Aorta (tissue), 5 donors: ENCODE measurements at regions of chr1 and their contacts with region 1.

Region 1: GRCh38 chr1:244835276-244836134 is at the start of gene COX20:
- DNase-seq: peak; percentile 94 to 96
- ATAC-seq: peak; percentile 95
- H3K4me3 ChIP-seq: peak within 1 kb of the TSS; percentile 92 to 98
- H3K27ac ChIP-seq: peak within 1 kb of the TSS; percentile 97
- H3K4me1 ChIP-seq: peaks cover 3 to 6% of the 10 kb centered on the region in 2 donors
- H3K27me3 ChIP-seq: no peaks in the 10 kb centered on the region
- total RNA-seq, gene COX20: 22.8 to 29.7 TPM

Region 2: DNA sequence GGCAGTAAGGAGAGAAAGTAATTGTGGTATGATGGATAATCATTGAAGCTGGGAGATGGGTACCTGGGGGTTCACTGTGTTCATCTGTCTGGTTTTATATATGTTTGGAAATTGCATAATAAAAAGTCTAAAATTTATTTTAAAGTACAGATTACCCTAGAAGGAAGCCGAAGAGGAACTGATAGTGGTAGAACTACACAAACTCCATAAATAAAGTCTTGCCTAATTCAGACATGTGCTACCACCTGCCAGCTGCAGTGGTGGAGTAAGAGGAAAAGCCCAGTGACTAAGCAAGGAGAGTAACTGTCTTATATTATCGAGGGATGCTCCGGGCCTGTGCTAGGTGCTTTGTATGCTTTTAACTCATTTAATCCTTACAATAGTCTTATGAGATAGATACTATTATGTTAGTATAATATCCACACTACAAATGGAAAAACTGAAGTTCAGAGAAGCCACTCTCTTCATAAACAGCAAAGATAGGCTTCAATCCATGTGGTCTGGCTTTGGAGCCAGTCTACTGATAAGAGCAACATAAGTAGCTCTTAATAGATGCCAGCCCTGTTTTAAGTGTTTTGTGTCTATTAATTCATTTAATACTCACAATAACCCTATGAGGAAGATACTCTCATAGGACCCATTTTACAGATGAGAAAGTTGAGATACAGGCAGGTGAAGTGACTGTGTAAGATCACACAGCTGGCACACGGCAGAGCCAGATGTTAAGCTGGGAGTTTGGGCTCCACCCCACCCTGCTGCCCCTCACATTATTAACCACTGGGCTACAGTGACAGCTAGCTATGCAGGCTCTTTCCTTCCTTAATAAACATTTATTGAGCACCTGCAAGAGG is 85.6 kb after region 1 on chr1:
- intact Hi-C with region 1: no loop called
- DNase-seq: no peak
- ATAC-seq: no peak
- H3K4me3 ChIP-seq: no peak overlapping the region
- H3K27ac ChIP-seq: no peak overlapping the region
- H3K4me1 ChIP-seq: no peaks in the 10 kb centered on the region
- H3K27me3 ChIP-seq: no peaks in the 10 kb centered on the region

Region 3: GRCh38 chr1:244970661-244971551 is 135.4 kb after region 1 on chr1:
- intact Hi-C with region 1: loop called (anchors 2 to 10 kb)
- DNase-seq: peak; percentile 96 to 97
- ATAC-seq: peak; percentile 95
- H3K4me3 ChIP-seq: peak overlapping the region; percentile 76 to 94
- H3K27ac ChIP-seq: peak overlapping the region; percentile 97 to 98
- H3K4me1 ChIP-seq: peaks cover 0 to 2% of the 10 kb centered on the region in 2 donors
- H3K27me3 ChIP-seq: no peaks in the 10 kb centered on the region